PC-9 (cell line): ENCODE measurements at regions of chr7 and their contacts with region 1.

Region 1: GRCh38 chr7:152436111-152436930 is 518 bp upstream of the KMT2C start:
- DNase-seq: peak; percentile 75 to 96
- H3K4me3 ChIP-seq: peak overlapping the region; percentile 67
- H3K27ac ChIP-seq: peak overlapping the region; percentile 50
- H3K4me1 ChIP-seq: peaks cover 26% of the 10 kb centered on the region
- H3K27me3 ChIP-seq: no peaks in the 10 kb centered on the region
- CTCF ChIP-seq: no peak

Region 2: GRCh38 chr7:152395112-152395511 is 41.2 kb before region 1 on chr7:
- CTCF ChIA-PET with region 1: no interaction called
- POLR2A ChIA-PET with region 1: no interaction called
- intact Hi-C with region 1: no loop called
- DNase-seq: no peak
- H3K4me3 ChIP-seq: no peak overlapping the region
- H3K27ac ChIP-seq: no peak overlapping the region
- H3K4me1 ChIP-seq: no peaks in the 10 kb centered on the region
- H3K27me3 ChIP-seq: no peaks in the 10 kb centered on the region
- CTCF ChIP-seq: no peak

Region 3: DNA sequence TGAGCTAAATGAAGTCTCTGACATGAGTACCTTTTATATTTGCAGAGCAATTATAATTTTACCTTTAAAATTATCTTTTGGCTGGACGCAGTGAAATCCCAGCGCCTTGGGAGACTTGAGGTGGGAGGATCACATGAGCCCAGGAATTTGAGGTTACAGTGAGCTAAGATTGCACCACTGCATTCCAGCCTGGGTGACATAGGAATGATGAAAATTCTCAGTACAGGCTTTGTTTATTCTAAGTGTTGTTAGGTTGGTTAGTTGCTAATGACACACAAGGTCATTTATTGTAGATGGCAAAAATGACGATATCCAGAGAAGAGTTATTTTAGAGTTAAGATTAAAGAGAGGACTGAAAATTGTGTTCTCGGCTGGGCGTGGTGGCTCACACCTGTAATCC is 152.0 kb after region 1 on chr7:
- CTCF ChIA-PET with region 1: no interaction called
- POLR2A ChIA-PET with region 1: interaction called, 10 read pairs
- intact Hi-C with region 1: no loop called
- DNase-seq: peak; percentile 61 to 88
- H3K4me3 ChIP-seq: no peak overlapping the region
- H3K27ac ChIP-seq: no peak overlapping the region
- H3K4me1 ChIP-seq: peaks cover 14% of the 10 kb centered on the region
- H3K27me3 ChIP-seq: no peaks in the 10 kb centered on the region
- CTCF ChIP-seq: no peak

Region 4: GRCh38 chr7:152675759-152676636 is 239.7 kb after region 1 on chr7 and contains the start of gene XRCC2:
- CTCF ChIA-PET with region 1: no interaction called
- POLR2A ChIA-PET with region 1: interaction called, 3 read pairs
- intact Hi-C with region 1: loop called (anchors 10 kb)
- DNase-seq: peak; percentile 76 to 97
- H3K4me3 ChIP-seq: peak within 1 kb of the TSS; percentile 93
- H3K27ac ChIP-seq: peak within 1 kb of the TSS; percentile 60
- H3K4me1 ChIP-seq: peaks cover 24% of the 10 kb centered on the region
- H3K27me3 ChIP-seq: no peaks in the 10 kb centered on the region
- CTCF ChIP-seq: no peak
- total RNA-seq, gene XRCC2: 21.2 and 25.0 TPM in 2 replicates